Left ventricle myocardium superior (tissue), 1 donor: ENCODE measurements at regions of chr13 and their contacts with region 1.

Region 1: GRCh38 chr13:20945952-20946383 is 43.4 kb upstream of the XPO4 start:
- DNase-seq: no peak
- ATAC-seq: peak; percentile 31

Region 2: DNA sequence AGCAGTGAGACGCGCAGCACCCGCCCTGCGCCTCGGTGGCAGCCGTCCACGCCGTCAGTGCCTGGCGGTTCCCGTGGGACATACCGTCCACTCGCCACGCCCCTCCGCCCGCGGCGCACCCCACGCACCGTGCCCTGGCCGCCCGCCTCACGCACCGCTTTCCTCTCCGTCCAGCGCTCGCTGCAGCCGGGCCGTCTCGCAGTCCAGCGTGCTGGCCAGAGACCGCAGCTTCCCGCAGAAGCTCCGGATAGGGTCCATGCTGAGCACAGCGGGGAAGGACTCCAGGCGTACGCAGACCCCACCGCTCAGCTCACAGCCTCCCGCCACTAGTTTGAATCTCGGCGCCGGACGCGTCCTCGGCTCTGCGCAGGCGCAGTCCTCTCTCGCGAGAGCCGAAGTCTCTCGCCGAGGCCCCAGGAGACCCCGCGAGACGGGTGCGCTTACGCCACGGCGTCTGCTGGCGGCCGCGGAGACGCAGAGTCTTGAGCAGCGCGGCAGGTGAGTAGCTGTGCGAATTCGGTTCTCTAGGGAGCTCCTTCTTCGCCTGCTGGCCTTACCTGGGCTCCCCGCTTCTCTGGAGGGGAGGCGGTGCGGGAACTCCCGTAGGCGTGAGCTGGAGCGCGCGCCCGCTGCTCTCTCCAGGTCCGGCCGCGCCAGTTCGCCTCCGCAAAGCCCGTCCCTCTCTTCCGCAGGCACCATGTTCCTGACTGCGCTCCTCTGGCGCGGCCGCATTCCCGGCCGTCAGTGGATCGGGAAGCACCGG is 230.4 kb after region 1 on chr13 and contains the starts of genes MRPL57 and SKA3:
- intact Hi-C with region 1: loop called (anchors 10 kb)
- DNase-seq: peak; percentile 96
- ATAC-seq: peak; percentile 98
- total RNA-seq, gene MRPL57: 23.7 TPM
- total RNA-seq, gene SKA3: 0.12 TPM

Region 3: DNA sequence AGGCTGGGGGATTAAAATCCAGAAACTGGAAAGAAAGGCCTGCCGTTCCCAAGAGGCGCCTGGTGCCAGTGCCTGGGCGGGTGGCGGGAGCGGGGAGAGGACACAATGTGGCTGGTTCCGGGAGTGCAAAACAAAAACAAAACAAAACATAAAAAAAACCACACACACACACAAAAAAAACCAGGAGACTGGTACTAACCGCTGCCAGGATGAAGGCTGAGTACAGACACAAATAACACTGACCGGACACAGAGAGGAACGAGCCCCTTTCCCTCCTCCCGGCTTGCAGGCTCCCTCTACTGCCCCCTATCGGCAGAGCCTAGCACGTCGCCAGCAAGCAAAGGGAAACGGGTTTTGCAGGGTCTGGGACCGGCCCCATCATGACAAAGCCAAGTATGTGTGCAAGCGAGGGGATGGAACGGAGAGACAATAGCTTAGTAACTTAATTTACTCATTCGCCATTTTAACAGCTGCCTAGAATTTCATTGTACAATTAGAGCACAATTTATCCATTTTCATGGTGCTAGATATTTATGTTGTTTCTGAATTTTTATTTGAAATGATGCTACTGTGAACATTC is 531.0 kb after region 1 on chr13:
- intact Hi-C with region 1: loop called (anchors 10 kb)
- DNase-seq: peak; percentile 82
- ATAC-seq: peak; percentile 75